Naive thymus-derived CD4-positive, alpha-beta T cell (primary cell): ENCODE measurements at regions of chr7 and their contacts with region 1.

Region 1: GRCh38 chr7:7201578-7202374 is 19.4 kb downstream of the C1GALT1 start:
- DNase-seq: peak; percentile 16 to 63 (median 54)
- ATAC-seq: peak; percentile 91
- H3K4me3 ChIP-seq: peak overlapping the region; percentile 21
- H3K4me3 Mint-ChIP-seq: peak overlapping the region; percentile 56 to 85 (median 78)
- H3K27ac ChIP-seq: peak overlapping the region; percentile 38
- H3K27ac Mint-ChIP-seq: peak overlapping the region; percentile 5 to 90 (median 86)
- H3K4me1 ChIP-seq: peaks cover 30 to 31% of the 10 kb centered on the region in 2 donors
- H3K4me1 Mint-ChIP-seq: peaks cover 60 to 94% (median 84%) of the 10 kb centered on the region in 7 donors
- H3K27me3 ChIP-seq: no peaks in the 10 kb centered on the region
- H3K27me3 Mint-ChIP-seq: no peaks in the 10 kb centered on the region

Region 2: DNA sequence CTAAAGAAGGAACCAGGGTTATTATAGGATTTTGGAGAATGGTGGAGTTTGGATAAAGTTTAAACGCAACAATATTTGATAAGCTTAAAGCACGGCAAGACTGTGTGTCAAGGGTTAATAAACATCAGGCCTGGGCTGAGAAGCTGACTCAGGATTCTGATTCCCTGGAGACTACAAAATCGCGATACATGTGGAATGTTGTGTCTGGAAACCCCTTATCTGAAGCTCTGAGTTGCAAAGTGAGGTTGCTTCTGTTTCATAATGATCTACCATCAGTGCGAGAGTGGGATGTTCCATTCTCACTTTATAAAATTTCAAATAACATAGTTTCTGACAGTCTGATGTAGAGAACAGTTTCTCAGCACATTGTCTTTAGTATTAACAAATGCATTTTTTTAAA is 11.6 kb before region 1 on chr7:
- CTCF ChIA-PET with region 1: no interaction called
- POLR2A ChIA-PET with region 1: no interaction called
- intact Hi-C with region 1: loop called in 1 of 2 experiments (anchors 1 kb)
- DNase-seq: no peak
- ATAC-seq: no peak
- H3K4me3 ChIP-seq: no peak overlapping the region
- H3K4me3 Mint-ChIP-seq: peak overlapping the region in 1 of 10 donors; percentile 7
- H3K27ac ChIP-seq: no peak overlapping the region
- H3K27ac Mint-ChIP-seq: peak overlapping the region in 2 of 9 donors; percentile 8 to 16
- H3K4me1 ChIP-seq: peaks cover 16 to 41% of the 10 kb centered on the region in 2 donors
- H3K4me1 Mint-ChIP-seq: peaks cover 25 to 54% (median 41%) of the 10 kb centered on the region in 7 donors
- H3K27me3 ChIP-seq: no peaks in the 10 kb centered on the region
- H3K27me3 Mint-ChIP-seq: no peaks in the 10 kb centered on the region

Region 3: GRCh38 chr7:7221602-7222038 is 19.8 kb after region 1 on chr7:
- CTCF ChIA-PET with region 1: interaction called, 3 read pairs
- POLR2A ChIA-PET with region 1: no interaction called
- intact Hi-C with region 1: loop called in 1 of 2 experiments (anchors 2 kb)
- DNase-seq: no peak
- ATAC-seq: no peak
- H3K4me3 ChIP-seq: no peak overlapping the region
- H3K4me3 Mint-ChIP-seq: peak overlapping the region in 1 of 10 donors; percentile 11
- H3K27ac ChIP-seq: no peak overlapping the region
- H3K27ac Mint-ChIP-seq: peak overlapping the region in 2 of 9 donors; percentile 9 to 25
- H3K4me1 ChIP-seq: no peaks in the 10 kb centered on the region
- H3K4me1 Mint-ChIP-seq: peaks cover 19 to 66% (median 51%) of the 10 kb centered on the region in 7 donors
- H3K27me3 ChIP-seq: no peaks in the 10 kb centered on the region
- H3K27me3 Mint-ChIP-seq: no peaks in the 10 kb centered on the region

Region 4: GRCh38 chr7:7257899-7258692 is 56.3 kb after region 1 on chr7:
- CTCF ChIA-PET with region 1: no interaction called
- POLR2A ChIA-PET with region 1: no interaction called
- intact Hi-C with region 1: loop called (anchors 5 kb)
- DNase-seq: no peak
- ATAC-seq: peak; percentile 60
- H3K4me3 ChIP-seq: no peak overlapping the region
- H3K4me3 Mint-ChIP-seq: peak overlapping the region; percentile 46 to 78 (median 71)
- H3K27ac ChIP-seq: peak overlapping the region; percentile 62
- H3K27ac Mint-ChIP-seq: peak overlapping the region; percentile 70 to 92 (median 86)
- H3K4me1 ChIP-seq: peaks cover 14 to 19% of the 10 kb centered on the region in 2 donors
- H3K4me1 Mint-ChIP-seq: peaks cover 10 to 64% (median 49%) of the 10 kb centered on the region in 7 donors
- H3K27me3 ChIP-seq: no peaks in the 10 kb centered on the region
- H3K27me3 Mint-ChIP-seq: no peaks in the 10 kb centered on the region